Sigmoid colon (tissue), 7 donors: ENCODE measurements at regions of chr4 and their contacts with region 1.

Region 1: GRCh38 chr4:128386761-128387599 is 99.4 kb upstream of the PGRMC2 start:
- DNase-seq: peak; percentile 98
- H3K4me3 ChIP-seq: no peak overlapping the region
- H3K27ac ChIP-seq: peak overlapping the region; percentile 82 to 88 (median 84)
- H3K4me1 ChIP-seq: peaks cover 0 to 74% (median 67%) of the 10 kb centered on the region in 4 donors
- H3K27me3 ChIP-seq: no peaks in the 10 kb centered on the region
- CTCF ChIP-seq: no peak
- EP300 ChIP-seq: peak; percentile 44 to 87 (median 72)
- POLR2A ChIP-seq: no peak

Region 2: GRCh38 chr4:128006592-128006991 is 380.4 kb before region 1 on chr4:
- intact Hi-C with region 1: no loop called
- DNase-seq: no peak
- H3K4me3 ChIP-seq: no peak overlapping the region
- H3K27ac ChIP-seq: no peak overlapping the region
- H3K4me1 ChIP-seq: no peaks in the 10 kb centered on the region
- H3K27me3 ChIP-seq: no peaks in the 10 kb centered on the region
- CTCF ChIP-seq: no peak
- EP300 ChIP-seq: no peak
- POLR2A ChIP-seq: no peak

Region 3: DNA sequence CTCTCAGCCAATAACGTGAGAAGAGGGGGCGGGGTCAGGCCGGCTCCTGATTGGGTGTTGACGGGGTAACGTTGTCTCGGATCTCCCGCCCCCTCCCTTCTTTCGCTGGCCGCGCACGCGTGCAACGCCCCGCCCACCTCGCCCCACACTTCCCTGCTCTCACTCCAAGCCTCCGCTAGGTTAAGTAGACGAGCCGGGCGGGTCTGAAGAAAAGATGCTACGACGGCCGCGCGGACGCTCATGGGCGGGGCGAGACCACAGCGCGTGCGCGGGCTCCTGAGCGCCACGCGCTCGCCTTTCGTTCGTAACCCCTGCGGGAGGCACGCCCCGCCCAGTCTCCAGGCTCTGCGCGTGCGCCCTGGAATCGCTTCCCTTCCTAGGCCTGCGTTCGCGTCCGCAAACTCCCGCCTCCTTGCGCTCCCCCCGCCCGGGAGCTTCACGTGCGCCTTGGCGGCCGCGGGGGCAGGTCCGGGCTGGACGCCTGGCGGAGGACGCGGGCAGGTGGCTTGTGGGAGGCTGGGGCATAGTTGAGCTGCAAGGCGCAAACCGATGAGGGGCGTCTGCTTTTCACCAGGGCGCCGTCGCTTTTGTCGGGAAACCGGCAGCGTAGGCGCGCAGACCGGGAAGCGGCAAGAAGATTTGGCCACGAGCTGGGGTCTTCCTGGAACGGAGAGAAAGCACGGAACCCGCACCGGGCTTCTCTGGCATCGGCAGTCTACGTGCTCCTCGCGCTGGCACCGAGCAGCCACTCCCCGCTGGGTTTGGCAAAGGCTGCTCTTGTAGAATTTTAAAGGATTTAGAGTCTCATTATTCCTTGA is 98.9 kb before region 1 on chr4:
- intact Hi-C with region 1: loop called (anchors 2 kb)
- DNase-seq: peak; percentile 100
- H3K4me3 ChIP-seq: peak overlapping the region; percentile 75 to 90 (median 88)
- H3K27ac ChIP-seq: peak overlapping the region; percentile 89 to 97 (median 94)
- H3K4me1 ChIP-seq: peaks cover 0 to 38% (median 25%) of the 10 kb centered on the region in 4 donors
- H3K27me3 ChIP-seq: no peaks in the 10 kb centered on the region
- CTCF ChIP-seq: peak in 3 of 4 experiments; percentile 30 to 37 (median 32)
- EP300 ChIP-seq: peak in 2 of 4 donors; percentile 61 to 63
- POLR2A ChIP-seq: peak; percentile 47 to 53

Region 4: GRCh38 chr4:128322311-128322710 is 64.7 kb before region 1 on chr4:
- intact Hi-C with region 1: no loop called
- DNase-seq: no peak
- H3K4me3 ChIP-seq: no peak overlapping the region
- H3K27ac ChIP-seq: peak overlapping the region in 1 of 4 donors; percentile 59
- H3K4me1 ChIP-seq: peaks cover 0 to 5% (median 0%) of the 10 kb centered on the region in 4 donors
- H3K27me3 ChIP-seq: no peaks in the 10 kb centered on the region
- CTCF ChIP-seq: no peak
- EP300 ChIP-seq: no peak
- POLR2A ChIP-seq: no peak

Region 5: DNA sequence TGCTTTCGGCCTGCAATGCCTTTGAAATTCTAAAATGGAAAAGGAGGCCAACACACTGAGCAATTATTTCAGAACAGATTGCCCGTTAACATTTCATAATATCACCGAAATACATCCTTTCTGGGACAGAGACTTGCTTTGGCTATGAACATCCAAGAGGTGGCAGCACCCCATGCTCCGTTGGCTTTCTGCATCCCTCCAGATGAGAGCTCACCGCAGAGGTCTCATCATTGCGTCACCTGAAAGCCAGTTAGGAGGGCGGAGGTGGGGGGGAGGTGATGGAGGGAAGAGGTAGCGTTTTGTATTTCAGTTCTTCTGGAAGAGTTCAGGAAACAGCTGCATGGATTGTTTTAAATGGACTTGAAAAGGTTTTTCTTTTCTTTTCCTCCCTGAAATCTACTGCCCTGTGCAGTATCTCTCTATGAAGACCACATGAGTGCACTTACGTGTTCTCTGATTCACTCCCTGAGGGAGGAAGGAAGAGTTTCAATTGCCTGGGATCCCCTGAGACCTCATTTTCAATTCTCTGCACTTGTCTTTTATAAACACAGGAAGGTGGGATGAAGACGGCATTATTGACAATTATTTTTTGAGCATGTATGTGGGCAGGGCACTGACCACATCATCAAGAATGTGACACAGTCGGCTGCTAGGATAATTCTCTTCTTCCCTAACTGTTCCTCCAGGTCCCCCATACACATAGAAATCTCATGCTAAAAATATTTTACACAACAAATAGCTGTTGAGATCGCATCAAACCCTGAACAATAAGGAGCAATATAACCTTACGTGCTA is 67.5 kb after region 1 on chr4:
- intact Hi-C with region 1: loop called (anchors 2 kb)
- DNase-seq: peak; percentile 95
- H3K4me3 ChIP-seq: no peak overlapping the region
- H3K27ac ChIP-seq: peak overlapping the region in 2 of 4 donors; percentile 27 to 49
- H3K4me1 ChIP-seq: peaks cover 0 to 48% (median 30%) of the 10 kb centered on the region in 4 donors
- H3K27me3 ChIP-seq: no peaks in the 10 kb centered on the region
- CTCF ChIP-seq: peak; percentile 73 to 86 (median 76)
- EP300 ChIP-seq: no peak
- POLR2A ChIP-seq: no peak

Region 6: DNA sequence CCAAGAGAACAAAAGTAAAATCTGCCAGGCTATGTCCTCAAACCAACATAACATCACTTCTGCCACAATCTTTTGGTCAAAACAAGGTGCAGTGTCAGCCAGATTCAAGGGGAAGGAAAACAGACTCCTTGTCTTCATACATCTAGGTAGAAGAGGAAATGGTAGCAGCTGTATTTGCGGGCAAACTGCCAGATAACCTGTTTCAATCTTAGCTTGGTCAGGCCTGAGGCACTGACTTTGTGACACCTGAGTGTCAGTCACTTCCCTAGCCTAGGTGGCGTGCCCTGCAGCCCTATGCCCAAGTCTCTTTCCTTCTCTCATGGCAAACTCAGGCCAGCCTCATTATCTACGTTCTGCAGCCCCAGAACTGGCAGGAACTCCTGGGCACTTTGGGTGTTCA is 276.4 kb after region 1 on chr4:
- intact Hi-C with region 1: loop called (anchors 2 kb)
- DNase-seq: no peak
- H3K4me3 ChIP-seq: no peak overlapping the region
- H3K27ac ChIP-seq: no peak overlapping the region
- H3K4me1 ChIP-seq: peaks cover 0 to 50% (median 40%) of the 10 kb centered on the region in 4 donors
- H3K27me3 ChIP-seq: no peaks in the 10 kb centered on the region
- CTCF ChIP-seq: no peak
- EP300 ChIP-seq: no peak
- POLR2A ChIP-seq: no peak

Region 7: DNA sequence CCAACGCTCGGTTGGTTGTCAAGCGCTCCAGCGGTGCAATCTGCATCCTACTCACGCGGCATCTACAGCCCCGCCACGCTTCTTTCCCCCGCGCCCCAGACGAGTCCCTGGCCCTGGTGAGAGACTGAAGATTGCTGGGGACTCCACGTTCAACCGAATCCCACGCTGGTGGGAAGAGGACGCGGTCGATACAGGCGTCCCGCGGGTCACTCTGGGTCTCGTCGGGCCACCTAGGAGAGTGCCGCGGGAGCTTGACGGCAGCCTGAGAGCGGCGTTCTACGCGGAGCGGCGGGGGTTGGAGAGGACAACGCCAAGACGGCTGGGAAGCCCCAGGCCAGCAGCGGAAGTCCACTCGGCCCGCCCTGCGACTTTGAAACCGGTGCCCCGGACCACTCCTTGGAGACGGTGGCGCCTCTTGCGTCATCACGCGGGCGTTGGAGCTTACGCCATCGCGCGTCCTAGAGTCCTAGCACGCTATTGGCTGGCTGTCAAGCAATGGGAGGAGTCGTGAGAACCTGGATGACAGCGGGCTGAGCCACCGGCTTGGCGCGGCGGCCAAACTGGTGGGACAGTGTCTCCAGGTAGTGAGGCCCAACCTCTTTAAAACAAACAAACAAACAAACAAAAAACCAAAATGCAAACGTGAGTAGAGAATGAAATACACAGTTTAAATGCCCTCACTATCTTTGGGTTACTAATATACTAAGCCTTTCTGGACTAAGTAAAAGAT is 706.4 kb after region 1 on chr4 and contains the start of gene SCLT1:
- intact Hi-C with region 1: loop called (anchors 5 kb)
- DNase-seq: peak; percentile 99
- H3K4me3 ChIP-seq: peak within 1 kb of the TSS; percentile 77 to 88 (median 78)
- H3K27ac ChIP-seq: peak within 1 kb of the TSS; percentile 96 to 98 (median 96)
- H3K4me1 ChIP-seq: peaks cover 0 to 24% (median 18%) of the 10 kb centered on the region in 4 donors
- H3K27me3 ChIP-seq: no peaks in the 10 kb centered on the region
- CTCF ChIP-seq: no peak
- EP300 ChIP-seq: peak in 1 of 4 donors; percentile 12
- POLR2A ChIP-seq: peak; percentile 61 to 84
- total RNA-seq, gene SCLT1: 9.9 to 18.8 (median 14.0) TPM